Uterus (tissue), 4 donors: ENCODE measurements at regions of chr6 and their contacts with region 1.

Region 1: GRCh38 chr6:138520463-138520862 is 21.2 kb upstream of the NHSL1 start:
- DNase-seq: no peak
- H3K4me3 ChIP-seq: no peak overlapping the region
- H3K27ac ChIP-seq: no peak overlapping the region
- H3K4me1 ChIP-seq: no peaks in the 10 kb centered on the region
- H3K27me3 ChIP-seq: no peaks in the 10 kb centered on the region
- CTCF ChIP-seq: peak in 2 of 4 experiments; percentile 19 to 28
- POLR2A ChIP-seq: no peak

Region 2: DNA sequence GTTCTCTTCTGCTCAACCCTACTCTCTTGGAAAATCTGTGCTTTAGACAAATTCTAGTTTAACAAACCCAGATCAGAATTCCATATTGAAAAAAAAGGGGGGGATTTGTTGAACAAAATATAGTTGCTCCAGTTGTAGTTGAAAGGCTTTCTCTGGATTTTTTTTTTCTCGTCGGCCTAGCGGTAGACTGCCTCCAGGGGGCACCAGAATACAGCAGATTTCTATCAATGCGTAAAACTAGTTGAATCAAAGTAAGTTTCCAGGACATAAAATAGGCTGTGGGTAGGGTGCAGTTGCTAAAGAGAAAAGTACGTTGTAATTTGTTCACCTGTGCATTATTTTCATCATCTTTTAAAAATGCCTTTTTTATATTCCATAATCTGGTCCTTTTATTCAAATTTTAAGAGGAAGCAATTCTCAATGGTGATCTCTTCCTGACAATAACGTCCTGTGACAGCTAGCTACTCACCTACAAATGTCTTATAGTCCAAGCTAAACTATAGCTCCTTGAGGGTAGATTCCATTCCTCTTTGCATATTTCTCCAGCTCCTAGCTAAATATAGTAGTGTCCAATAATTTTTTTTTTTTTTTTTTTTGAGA is 518.6 kb before region 1 on chr6:
- intact Hi-C with region 1: no loop called
- DNase-seq: peak; percentile 46 to 47
- H3K4me3 ChIP-seq: no peak overlapping the region
- H3K27ac ChIP-seq: no peak overlapping the region
- H3K4me1 ChIP-seq: no peaks in the 10 kb centered on the region
- H3K27me3 ChIP-seq: no peaks in the 10 kb centered on the region
- CTCF ChIP-seq: peak; percentile 70 to 80 (median 76)
- POLR2A ChIP-seq: no peak

Region 3: GRCh38 chr6:138115877-138116660 is 404.4 kb before region 1 on chr6:
- intact Hi-C with region 1: loop called (anchors 10 kb)
- DNase-seq: peak; percentile 21 to 39
- H3K4me3 ChIP-seq: no peak overlapping the region
- H3K27ac ChIP-seq: no peak overlapping the region
- H3K4me1 ChIP-seq: no peaks in the 10 kb centered on the region
- H3K27me3 ChIP-seq: no peaks in the 10 kb centered on the region
- CTCF ChIP-seq: peak; percentile 67 to 78 (median 73)
- POLR2A ChIP-seq: no peak

Region 4: DNA sequence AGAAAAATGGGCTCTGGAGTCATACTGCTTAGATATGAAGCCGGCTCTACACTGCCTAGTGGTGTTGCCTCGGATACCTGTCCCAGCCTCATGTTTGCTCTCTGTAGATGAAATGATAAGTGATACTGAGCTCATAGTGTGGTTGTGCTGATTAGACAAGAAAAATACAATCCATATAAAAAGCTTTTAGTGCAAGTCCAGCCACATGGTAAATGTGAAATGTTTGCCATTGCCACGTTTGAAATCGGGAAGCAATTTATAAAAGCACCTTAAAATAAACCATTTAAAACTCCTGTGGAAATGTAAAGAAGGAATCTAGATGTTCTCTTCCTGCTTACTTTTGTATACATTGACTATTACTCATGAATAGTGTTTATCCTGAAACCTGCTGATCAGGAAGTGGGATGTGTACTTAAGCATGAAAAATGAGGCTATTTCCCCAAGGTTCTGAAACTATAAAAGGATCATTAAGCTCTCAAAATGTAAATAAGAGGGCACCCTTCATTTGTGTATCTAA is 289.0 kb before region 1 on chr6:
- intact Hi-C with region 1: no loop called
- DNase-seq: no peak
- H3K4me3 ChIP-seq: no peak overlapping the region
- H3K27ac ChIP-seq: no peak overlapping the region
- H3K4me1 ChIP-seq: no peaks in the 10 kb centered on the region
- H3K27me3 ChIP-seq: no peaks in the 10 kb centered on the region
- CTCF ChIP-seq: no peak
- POLR2A ChIP-seq: no peak

Region 5: GRCh38 chr6:138403801-138404661 is 116.4 kb before region 1 on chr6 and contains the start of gene HEBP2:
- intact Hi-C with region 1: no loop called
- DNase-seq: peak; percentile 92 to 95
- H3K4me3 ChIP-seq: peak within 1 kb of the TSS; percentile 71 to 84
- H3K27ac ChIP-seq: peak within 1 kb of the TSS; percentile 97 to 98
- H3K4me1 ChIP-seq: no peaks in the 10 kb centered on the region
- H3K27me3 ChIP-seq: no peaks in the 10 kb centered on the region
- CTCF ChIP-seq: peak; percentile 46 to 77 (median 68)
- POLR2A ChIP-seq: peak; percentile 85 to 87
- total RNA-seq, gene HEBP2: 8.5 to 80.7 (median 35.1) TPM

Region 6: GRCh38 chr6:138944412-138944811 is 423.9 kb after region 1 on chr6:
- intact Hi-C with region 1: no loop called
- DNase-seq: no peak
- H3K4me3 ChIP-seq: no peak overlapping the region
- H3K27ac ChIP-seq: no peak overlapping the region
- H3K4me1 ChIP-seq: peaks cover 0 to 4% of the 10 kb centered on the region in 2 donors
- H3K27me3 ChIP-seq: no peaks in the 10 kb centered on the region
- CTCF ChIP-seq: no peak
- POLR2A ChIP-seq: no peak